ENCODE measurements at regions of chr13 and their contacts with region 1.

Region 1: GRCh38 chr13:69444756-69445155 is 662.9 kb upstream of the ATXN8OS start:
- DNase-seq: no peak
- ATAC-seq: no peak

Region 2: DNA sequence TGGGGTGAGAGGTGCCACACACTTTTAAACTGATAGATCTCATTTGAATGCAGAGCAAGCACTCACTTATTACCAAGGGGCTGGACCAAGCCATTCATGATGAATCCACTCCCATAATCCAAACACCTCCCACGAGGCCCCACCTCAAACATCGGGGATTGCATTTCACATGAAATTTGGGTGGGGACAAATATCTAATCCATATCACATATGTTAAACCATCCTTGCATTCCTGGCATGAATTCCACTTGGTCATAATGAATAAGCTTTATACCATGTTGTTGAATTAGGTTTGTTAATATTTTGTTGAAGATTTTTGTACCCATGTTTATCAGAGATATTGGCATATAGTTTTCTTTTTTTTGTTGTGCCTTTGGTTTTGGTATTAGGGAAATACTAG is 535.9 kb before region 1 on chr13:
- intact Hi-C with region 1: no loop called
- DNase-seq: no peak
- ATAC-seq: no peak

Region 3: GRCh38 chr13:69077267-69077666 is 367.5 kb before region 1 on chr13:
- intact Hi-C with region 1: loop called in 1 of 2 experiments (anchors 5 kb)
- DNase-seq: no peak
- ATAC-seq: no peak

Region 4: DNA sequence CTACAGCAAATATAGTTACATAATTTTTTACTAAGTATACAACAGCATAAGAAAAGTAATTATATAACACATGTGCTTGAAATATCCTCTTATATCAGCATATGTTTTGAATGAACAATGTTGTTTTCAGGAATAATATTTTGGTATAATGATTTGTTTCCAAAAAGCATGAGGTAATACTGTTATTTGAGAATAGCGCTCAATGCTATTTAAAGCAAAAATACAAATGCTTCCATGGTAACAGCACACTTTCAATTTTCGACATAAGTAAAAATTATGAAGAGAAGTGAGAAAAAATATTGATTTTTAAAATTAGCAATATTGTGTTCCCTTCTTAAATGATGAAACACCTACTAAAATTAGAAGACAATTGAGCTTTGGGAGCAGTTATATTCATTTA is 53.0 kb before region 1 on chr13:
- intact Hi-C with region 1: no loop called
- DNase-seq: no peak
- ATAC-seq: no peak

Measured in left cardiac atrium (tissue), 4 donors.